Gastrocnemius medialis (tissue), 4 donors: ENCODE measurements at regions of chr5 and their contacts with region 1.

Region 1: DNA sequence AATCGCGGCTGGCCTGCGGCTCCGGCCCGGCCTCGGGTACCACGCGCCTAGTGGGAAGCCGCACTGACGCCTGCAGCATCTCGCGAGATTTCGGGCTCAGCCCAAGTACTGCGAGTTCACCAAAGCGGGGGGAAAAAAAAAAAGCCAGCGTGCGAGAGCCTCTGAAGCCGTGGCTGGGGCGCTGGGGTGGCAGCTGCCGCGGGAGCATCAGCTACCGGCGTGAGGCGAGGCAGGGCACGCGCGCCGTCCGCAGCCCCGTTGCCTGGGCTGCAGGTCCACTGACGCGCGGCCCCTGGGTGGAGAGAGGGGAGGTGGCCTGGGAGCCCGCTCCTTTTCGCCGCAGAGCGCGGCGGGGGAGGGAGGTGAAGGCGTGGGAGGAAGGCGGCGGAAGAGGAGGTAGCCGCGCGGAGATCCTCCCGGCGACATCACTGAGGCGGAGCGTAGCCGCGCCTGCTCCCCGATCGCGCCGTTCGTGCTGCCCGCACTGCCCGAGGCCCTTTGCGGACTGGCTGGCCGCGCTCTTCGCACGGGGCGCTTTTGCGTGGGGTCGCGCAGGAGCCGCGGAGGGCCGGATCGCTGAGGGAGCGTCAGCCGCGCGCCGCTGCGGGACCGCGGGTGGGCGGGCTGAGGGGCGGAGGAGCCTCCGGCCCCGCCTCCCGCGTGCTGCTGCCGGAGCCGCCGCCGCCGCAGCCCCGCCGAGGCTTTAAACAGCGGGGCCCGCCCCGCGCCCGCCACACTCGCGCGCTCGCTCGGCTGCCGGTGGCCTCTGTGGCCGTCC is at the start of gene SLC12A2:
- DNase-seq: peak; percentile 90 to 91
- ATAC-seq: peak; percentile 80 to 81
- H3K4me3 ChIP-seq: peak within 1 kb of the TSS; percentile 79 to 88 (median 84)
- H3K27ac ChIP-seq: peak within 1 kb of the TSS; percentile 93 to 99 (median 99)
- H3K4me1 ChIP-seq: peaks cover 40 to 61% of the 10 kb centered on the region in 2 donors
- H3K27me3 ChIP-seq: no peaks in the 10 kb centered on the region
- CTCF ChIP-seq: peak in 1 of 5 experiments; percentile 8
- POLR2A ChIP-seq: peak; percentile 88 to 97
- total RNA-seq, gene SLC12A2: 11.6 to 21.0 (median 17.2) TPM

Region 2: DNA sequence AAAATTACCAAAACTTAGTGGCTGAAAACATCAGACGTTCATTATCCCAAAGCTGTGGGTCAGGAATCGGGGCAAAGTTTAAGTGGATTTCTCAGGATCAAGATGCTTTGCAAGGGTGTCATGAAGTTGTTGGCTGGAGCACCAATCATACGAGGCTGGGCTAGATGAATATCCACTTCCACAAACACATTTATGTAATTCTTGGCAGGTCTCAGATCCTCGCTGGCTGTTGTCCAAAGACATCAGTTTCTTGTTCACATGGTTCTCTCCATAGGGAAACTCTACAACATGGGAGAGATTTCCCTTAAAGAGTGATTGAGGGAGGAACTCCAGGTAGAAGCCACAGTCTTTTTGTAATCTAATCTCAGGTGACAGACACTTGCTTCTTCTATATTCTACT is 400.2 kb before region 1 on chr5:
- in situ Hi-C with region 1: no loop called
- intact Hi-C with region 1: loop called (anchors 10 kb)
- DNase-seq: no peak
- ATAC-seq: no peak
- H3K4me3 ChIP-seq: no peak overlapping the region
- H3K27ac ChIP-seq: peak overlapping the region in 3 of 4 donors; percentile 13 to 92 (median 78)
- H3K4me1 ChIP-seq: peaks cover 27 to 32% of the 10 kb centered on the region in 2 donors
- H3K27me3 ChIP-seq: no peaks in the 10 kb centered on the region
- CTCF ChIP-seq: no peak
- POLR2A ChIP-seq: no peak

Region 3: GRCh38 chr5:128038643-128039042 is 44.6 kb before region 1 on chr5:
- in situ Hi-C with region 1: no loop called
- intact Hi-C with region 1: no loop called
- DNase-seq: no peak
- ATAC-seq: peak in 1 of 2 donors; percentile 47
- H3K4me3 ChIP-seq: no peak overlapping the region
- H3K27ac ChIP-seq: no peak overlapping the region
- H3K4me1 ChIP-seq: peaks cover 4 to 9% of the 10 kb centered on the region in 2 donors
- H3K27me3 ChIP-seq: no peaks in the 10 kb centered on the region
- CTCF ChIP-seq: no peak
- POLR2A ChIP-seq: no peak